Naive thymus-derived CD8-positive, alpha-beta T cell (primary cell): ENCODE measurements at regions of chr9 and their contacts with region 1.

Region 1: DNA sequence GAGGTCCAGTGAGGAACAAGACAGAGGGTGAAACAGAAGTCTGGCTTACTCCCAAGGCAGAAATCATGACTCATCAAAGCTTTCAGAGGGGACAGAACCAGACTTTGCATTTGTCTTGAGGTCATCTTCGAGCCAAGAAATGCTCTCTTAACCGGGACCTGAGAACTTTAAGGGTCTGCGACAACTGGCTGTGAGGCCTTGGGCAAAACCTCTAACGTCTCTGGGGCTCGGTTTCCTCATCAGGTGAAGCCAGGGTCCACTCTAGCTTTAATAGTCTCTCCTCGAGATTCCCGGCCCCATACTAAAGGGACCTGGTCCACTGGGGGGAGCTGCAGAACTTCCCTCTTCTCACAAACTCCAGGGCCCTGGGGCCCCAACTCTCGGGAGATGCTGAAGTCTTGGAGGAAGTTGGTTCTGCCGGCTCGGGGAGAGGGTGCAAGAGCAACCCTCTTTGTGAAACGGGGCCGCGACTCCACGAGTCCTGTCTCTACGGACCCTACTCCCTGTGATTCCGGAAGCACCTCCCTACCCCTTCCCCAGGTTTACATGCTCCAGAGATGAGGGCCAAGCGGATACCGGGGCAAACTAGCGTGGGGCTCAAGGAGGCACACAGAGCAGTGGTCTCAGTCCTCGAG is 2.6 kb downstream of the GLIS3 start:
- DNase-seq: peak in 9 of 10 donors; percentile 10 to 64 (median 29)
- ATAC-seq: peak; percentile 35 to 39
- H3K4me3 Mint-ChIP-seq: peak overlapping the region; percentile 94 to 99 (median 96)
- H3K27ac Mint-ChIP-seq: peak overlapping the region; percentile 80 to 98 (median 92)
- H3K4me1 Mint-ChIP-seq: peaks cover 13 to 30% (median 19%) of the 10 kb centered on the region in 4 donors
- H3K27me3 Mint-ChIP-seq: peaks cover 0 to 36% (median 3%) of the 10 kb centered on the region in 5 donors

Region 2: GRCh38 chr9:4237748-4238511 is 59.3 kb before region 1 on chr9:
- POLR2A ChIA-PET with region 1: interaction called, 10 read pairs
- DNase-seq: peak in 3 of 10 donors; percentile 29 to 41 (median 38)
- ATAC-seq: peak; percentile 77 to 82
- H3K4me3 Mint-ChIP-seq: peak overlapping the region; percentile 70 to 90 (median 82)
- H3K27ac Mint-ChIP-seq: peak overlapping the region; percentile 75 to 88 (median 83)
- H3K4me1 Mint-ChIP-seq: peaks cover 26 to 49% (median 37%) of the 10 kb centered on the region in 4 donors
- H3K27me3 Mint-ChIP-seq: no peaks in the 10 kb centered on the region

Region 3: DNA sequence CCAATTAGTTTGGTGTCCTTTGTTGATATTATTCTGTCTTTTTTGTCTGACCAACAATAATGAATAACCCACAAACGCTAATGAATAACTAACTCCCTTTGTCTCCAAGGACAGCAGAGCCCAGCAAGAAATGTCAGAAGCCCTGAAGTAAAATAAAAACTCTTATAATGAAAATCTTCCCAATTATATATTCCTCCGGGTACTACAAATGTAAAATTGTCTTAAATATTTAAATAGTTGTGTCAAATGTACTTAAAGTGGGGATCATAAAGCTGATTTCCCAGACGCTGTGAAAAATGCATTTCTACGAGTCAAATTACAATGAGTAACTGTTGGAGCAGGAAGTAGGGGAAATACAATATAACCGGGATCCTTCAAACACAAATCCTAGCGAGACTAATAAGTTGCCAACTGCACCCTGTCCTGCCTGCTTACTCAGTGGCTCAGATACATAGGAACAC is 19.7 kb before region 1 on chr9:
- POLR2A ChIA-PET with region 1: no interaction called
- DNase-seq: no peak
- ATAC-seq: no peak
- H3K4me3 Mint-ChIP-seq: no peak overlapping the region
- H3K27ac Mint-ChIP-seq: no peak overlapping the region
- H3K4me1 Mint-ChIP-seq: peaks cover 3 to 7% (median 4%) of the 10 kb centered on the region in 4 donors
- H3K27me3 Mint-ChIP-seq: peaks cover 3 to 15% (median 5%) of the 10 kb centered on the region in 5 donors

Region 4: GRCh38 chr9:4386819-4387218 is 89.6 kb after region 1 on chr9:
- POLR2A ChIA-PET with region 1: no interaction called
- DNase-seq: peak in 3 of 10 donors; percentile 4 to 17 (median 10)
- ATAC-seq: peak in 1 of 2 donors; percentile 51
- H3K4me3 Mint-ChIP-seq: no peak overlapping the region
- H3K27ac Mint-ChIP-seq: peak overlapping the region in 1 of 10 donors; percentile 25
- H3K4me1 Mint-ChIP-seq: peaks cover 0 to 9% (median 3%) of the 10 kb centered on the region in 4 donors
- H3K27me3 Mint-ChIP-seq: peaks cover 0 to 4% (median 0%) of the 10 kb centered on the region in 5 donors